ENCODE measurements at regions of chr14 and their contacts with region 1.

Region 1: GRCh38 chr14:54566410-54567223 is at the start of gene SAMD4A:
- ATAC-seq: peak; percentile 14 to 56 (median 36)
- H3K4me3 ChIP-seq: peak within 1 kb of the TSS; percentile 73 to 85 (median 78)
- H3K27ac ChIP-seq: no peak within 1 kb of the TSS
- H3K4me1 ChIP-seq: peaks cover 3 to 8% of the 10 kb centered on the region in 2 donors
- total RNA-seq, gene SAMD4A: 2.1 to 38.6 (median 9.9) TPM

Region 2: GRCh38 chr14:54691525-54692283 is 125.1 kb after region 1 on chr14:
- in situ Hi-C with region 1: loop called in 5 of 9 experiments (anchors 10 to 25 kb)
- ATAC-seq: peak; percentile 59 to 99 (median 88)
- H3K4me3 ChIP-seq: no peak overlapping the region
- H3K27ac ChIP-seq: no peak overlapping the region
- H3K4me1 ChIP-seq: no peaks in the 10 kb centered on the region

Region 3: DNA sequence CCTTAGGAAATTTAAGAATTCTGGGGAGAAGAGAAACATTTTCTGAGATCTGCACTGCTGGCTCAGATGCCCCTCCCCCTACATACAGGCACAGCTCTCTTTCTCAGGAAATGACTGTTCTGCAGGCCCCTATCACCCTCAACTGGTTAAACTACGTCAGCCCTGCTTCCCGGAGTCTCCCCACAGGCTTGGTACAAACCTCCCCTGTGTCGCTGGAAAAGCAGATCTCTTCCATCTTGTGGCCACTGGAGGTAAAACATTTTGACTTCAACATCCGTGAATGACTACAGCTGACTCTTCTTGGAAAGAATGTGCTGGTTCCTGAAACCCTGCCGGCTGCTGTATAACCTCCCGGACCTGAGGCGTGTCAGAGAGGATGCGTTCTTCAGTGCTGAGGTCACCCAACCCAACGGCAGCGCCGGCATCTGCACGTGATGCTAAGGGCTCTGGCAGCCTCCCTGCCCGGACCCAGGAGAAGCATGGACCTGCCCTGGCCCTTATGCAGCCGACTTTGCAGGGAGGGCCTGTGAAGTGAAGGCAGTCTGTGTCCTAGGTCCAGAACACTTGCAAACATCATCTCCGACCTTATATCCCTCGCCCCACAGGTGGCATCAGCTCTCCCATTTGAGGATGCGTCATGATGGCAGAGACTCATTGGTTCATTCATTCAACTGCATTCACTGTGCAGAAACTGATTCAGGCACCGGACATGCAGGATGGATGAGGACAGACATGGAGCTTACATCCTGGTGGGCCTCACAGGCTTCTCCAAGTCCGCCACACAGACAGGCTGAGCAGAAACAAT is 206.8 kb after region 1 on chr14:
- in situ Hi-C with region 1: loop called in 4 of 9 experiments (anchors 10 to 25 kb)
- ATAC-seq: peak; percentile 86 to 96 (median 95)
- H3K4me3 ChIP-seq: no peak overlapping the region
- H3K27ac ChIP-seq: no peak overlapping the region
- H3K4me1 ChIP-seq: peaks cover 4 to 7% of the 10 kb centered on the region in 2 donors

Region 4: DNA sequence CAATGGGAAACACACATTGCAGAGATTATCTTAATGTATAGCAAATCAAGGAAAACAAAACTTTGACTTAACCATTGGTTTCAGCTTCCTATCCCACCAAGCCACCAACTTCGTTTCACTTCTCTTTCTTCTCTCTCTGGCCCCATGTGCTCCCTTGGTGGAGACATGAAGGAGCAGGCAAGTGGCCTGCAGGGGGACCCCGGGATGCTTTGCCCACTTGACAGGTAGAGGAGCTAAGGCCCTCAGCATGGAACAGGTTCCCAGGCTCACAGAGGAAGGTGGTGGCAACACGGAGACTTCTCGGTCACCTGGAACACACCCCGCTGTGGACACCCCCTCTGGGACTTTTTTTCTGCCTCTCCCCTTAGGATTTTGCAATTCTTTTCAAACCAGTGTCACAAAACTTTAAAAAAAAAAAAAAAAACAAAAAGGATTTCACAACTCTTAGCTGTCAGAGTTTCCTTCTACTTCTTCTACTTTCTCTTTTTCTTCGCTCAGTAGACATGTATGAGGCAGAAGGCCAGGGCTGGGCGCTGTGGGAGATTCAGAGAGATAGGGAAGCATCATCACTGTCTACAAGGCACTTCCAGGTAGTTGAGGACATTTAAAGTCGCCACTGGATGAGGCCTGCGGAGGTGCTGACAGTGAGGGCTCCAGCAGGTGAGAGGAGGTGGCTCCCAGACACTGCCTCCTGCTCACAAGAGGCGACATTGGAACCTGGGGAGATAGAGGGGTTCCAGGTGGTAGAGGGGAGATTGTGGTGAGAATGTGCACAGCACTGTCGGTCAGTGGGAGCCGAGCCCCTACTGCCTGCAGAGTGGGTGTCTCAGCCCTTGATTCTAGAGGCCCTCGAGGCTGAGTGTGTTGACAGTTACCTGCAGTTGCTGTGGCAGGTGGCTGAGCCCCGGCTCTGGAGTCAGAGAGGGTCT is 216.4 kb after region 1 on chr14:
- in situ Hi-C with region 1: loop called in 2 of 9 experiments (anchors 10 to 25 kb)
- ATAC-seq: no peak
- H3K4me3 ChIP-seq: no peak overlapping the region
- H3K27ac ChIP-seq: no peak overlapping the region
- H3K4me1 ChIP-seq: no peaks in the 10 kb centered on the region

Region 5: DNA sequence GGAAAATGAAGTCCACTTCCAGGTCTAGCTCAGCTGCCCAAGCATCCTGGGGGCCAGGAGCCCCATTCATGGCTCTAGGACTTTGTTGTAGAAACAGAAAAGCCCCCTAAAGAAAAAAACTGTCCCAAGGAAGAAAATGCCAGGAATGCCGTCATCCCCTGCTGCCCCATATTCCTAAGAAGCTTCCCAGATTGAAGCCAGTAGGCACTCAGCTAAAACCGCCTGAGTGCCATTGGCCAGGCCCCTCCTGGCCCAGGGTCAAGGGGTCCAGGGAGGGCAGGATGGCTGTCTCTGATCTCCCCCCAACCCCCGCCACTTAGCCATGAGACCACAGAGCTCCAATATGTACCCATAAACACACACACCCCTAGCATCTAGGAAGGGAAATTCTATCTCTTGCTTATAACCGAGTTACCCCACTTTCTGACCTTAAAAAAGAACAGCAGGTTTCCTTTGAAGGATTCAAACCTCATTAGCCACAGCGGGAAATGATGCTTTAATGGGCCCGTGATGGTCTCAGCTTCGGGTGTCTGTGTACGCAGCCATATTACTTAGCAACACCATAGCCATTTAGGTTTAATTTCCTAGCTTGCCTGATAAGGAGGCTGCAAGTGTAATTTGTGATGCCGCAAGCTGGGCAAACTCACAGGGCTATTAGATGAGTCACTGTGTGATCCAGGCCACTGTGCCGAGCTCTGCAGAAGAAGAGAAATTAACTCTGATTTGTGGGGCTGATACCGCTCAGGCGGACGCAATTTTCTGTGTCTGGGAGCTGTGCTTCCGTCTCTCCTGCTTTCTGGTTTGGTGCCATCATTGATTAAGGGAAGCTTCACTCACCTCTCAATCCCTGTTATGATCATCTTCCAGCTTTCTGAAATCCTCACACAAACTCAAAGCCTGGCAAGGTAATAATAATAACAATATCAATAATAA is 251.8 kb after region 1 on chr14:
- in situ Hi-C with region 1: no loop called
- ATAC-seq: peak in 7 of 8 experiments; percentile 68 to 99 (median 98)
- H3K4me3 ChIP-seq: peak overlapping the region in 1 of 5 donors; percentile 13
- H3K27ac ChIP-seq: peak overlapping the region; percentile 38 to 52
- H3K4me1 ChIP-seq: peaks cover 0 to 19% of the 10 kb centered on the region in 2 donors

Region 6: GRCh38 chr14:56027916-56028712 is 1461.5 kb after region 1 on chr14:
- in situ Hi-C with region 1: no loop called
- ATAC-seq: peak in 7 of 8 experiments; percentile 13 to 59 (median 29)
- H3K4me3 ChIP-seq: no peak overlapping the region
- H3K27ac ChIP-seq: no peak overlapping the region
- H3K4me1 ChIP-seq: peaks cover 5 to 15% of the 10 kb centered on the region in 2 donors